ENCODE measurements at regions of chr15 and their contacts with region 1.

Region 1: DNA sequence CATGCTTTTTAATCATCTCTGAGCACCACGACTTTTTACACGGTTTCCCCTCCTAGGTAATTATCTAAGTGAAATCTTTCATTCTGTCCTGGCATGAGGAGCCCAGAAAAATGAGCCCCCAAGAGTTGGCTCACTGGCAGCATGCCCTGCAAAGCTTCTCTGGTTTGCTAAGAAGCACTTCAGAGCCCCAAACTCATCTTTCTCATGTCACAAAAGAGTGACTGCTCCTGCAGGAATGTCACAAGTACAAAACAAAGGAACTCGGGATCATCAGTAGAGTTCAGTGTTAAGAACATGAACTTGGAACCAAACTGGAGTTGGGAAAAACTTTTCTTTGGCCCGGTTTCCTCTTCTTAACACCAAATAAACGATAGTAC is 123.9 kb downstream of the FOXB1 start:
- DNase-seq: no peak
- ATAC-seq: no peak
- H3K4me3 ChIP-seq: peak overlapping the region; percentile 43 to 67 (median 57); a peak in 5 of 6 replicates
- H3K27ac ChIP-seq: no peak overlapping the region
- H3K4me1 ChIP-seq: peaks cover 7% of the 10 kb centered on the region; the same call in 1 of the 2 replicates
- H3K27me3 ChIP-seq: no peaks in the 10 kb centered on the region
- CTCF ChIP-seq: no peak
- EP300 ChIP-seq: no peak
- POLR2A ChIP-seq: no peak
- RAD21 ChIP-seq: no peak

Region 2: GRCh38 chr15:59917504-59918157 is 210.4 kb before region 1 on chr15:
- CTCF ChIA-PET with region 1: interaction called, 3 read pairs
- POLR2A ChIA-PET with region 1: no interaction called
- in situ Hi-C with region 1: no loop called
- intact Hi-C with region 1: loop called (anchors 1 kb)
- DNase-seq: peak; percentile 50
- ATAC-seq: peak; percentile 99
- H3K4me3 ChIP-seq: no peak overlapping the region
- H3K27ac ChIP-seq: no peak overlapping the region
- H3K4me1 ChIP-seq: no peaks in the 10 kb centered on the region
- H3K27me3 ChIP-seq: peaks cover 0 to 5% of the 10 kb centered on the region in 2 experiments; a peak in 1 of 5 replicates
- CTCF ChIP-seq: peak; percentile 83
- EP300 ChIP-seq: no peak
- POLR2A ChIP-seq: no peak
- RAD21 ChIP-seq: peak; percentile 53